CD8-positive, alpha-beta T cell (primary cell): ENCODE measurements at regions of chr17 and their contacts with region 1.

Region 1: DNA sequence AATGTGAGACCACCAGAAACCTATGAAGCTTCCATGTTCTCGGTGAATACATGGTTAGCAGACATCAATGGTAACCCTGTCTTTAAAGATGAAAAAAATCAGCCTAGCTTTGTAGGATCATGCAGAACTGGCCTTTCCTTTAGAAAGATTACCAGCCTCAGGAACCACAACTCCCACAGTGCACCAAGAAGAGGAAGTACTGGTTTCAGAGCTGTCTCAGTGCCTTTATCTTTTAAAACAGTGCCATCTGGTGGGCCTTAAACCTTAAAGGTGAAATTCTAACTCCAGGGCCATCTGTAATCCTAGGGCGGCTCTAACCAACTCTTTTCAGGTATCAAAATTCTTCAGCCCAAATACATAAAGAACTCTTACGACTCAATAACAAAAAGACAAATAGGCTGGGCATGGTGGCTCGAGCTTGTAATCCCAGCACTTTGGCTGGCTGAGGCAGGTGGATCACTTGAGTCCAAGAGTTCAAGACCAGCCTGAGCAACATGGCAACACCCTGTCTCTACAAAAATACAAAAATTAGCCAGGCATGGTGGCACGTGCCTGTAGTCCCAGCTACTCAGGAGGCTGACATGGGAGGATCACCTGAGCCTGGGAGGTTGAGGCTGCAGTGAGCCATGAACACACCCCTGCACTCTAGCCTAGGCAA is 5.4 kb downstream of the ATPAF2 start:
- DNase-seq: peak in 8 of 9 experiments; percentile 28 to 88 (median 56)
- ATAC-seq: peak; percentile 94
- H3K4me3 ChIP-seq: no peak overlapping the region
- H3K4me3 Mint-ChIP-seq: no peak overlapping the region
- H3K27ac ChIP-seq: no peak overlapping the region
- H3K27ac Mint-ChIP-seq: no peak overlapping the region
- H3K4me1 ChIP-seq: peaks cover 18% of the 10 kb centered on the region
- H3K4me1 Mint-ChIP-seq: peaks cover 28% of the 10 kb centered on the region
- H3K27me3 ChIP-seq: no peaks in the 10 kb centered on the region
- H3K27me3 Mint-ChIP-seq: no peaks in the 10 kb centered on the region
- CTCF ChIP-seq: peak; percentile 62

Region 2: GRCh38 chr17:17496189-17497064 is 537.1 kb before region 1 on chr17 and contains the start of gene RASD1:
- CTCF ChIA-PET with region 1: interaction called, 3 read pairs
- POLR2A ChIA-PET with region 1: no interaction called
- intact Hi-C with region 1: loop called (anchors 2 to 5 kb)
- DNase-seq: peak; percentile 62 to 88 (median 75)
- ATAC-seq: peak; percentile 85
- H3K4me3 ChIP-seq: peak within 1 kb of the TSS; percentile 51 to 76
- H3K4me3 Mint-ChIP-seq: peak within 1 kb of the TSS; percentile 84
- H3K27ac ChIP-seq: no peak within 1 kb of the TSS
- H3K27ac Mint-ChIP-seq: no peak within 1 kb of the TSS
- H3K4me1 ChIP-seq: peaks cover 13% of the 10 kb centered on the region
- H3K4me1 Mint-ChIP-seq: peaks cover 16% of the 10 kb centered on the region
- H3K27me3 ChIP-seq: peaks cover 0 to 8% of the 10 kb centered on the region in 2 experiments
- H3K27me3 Mint-ChIP-seq: peaks cover 10% of the 10 kb centered on the region
- CTCF ChIP-seq: peak; percentile 95
- total RNA-seq, gene RASD1: 2.8 to 2.9 TPM

Region 3: DNA sequence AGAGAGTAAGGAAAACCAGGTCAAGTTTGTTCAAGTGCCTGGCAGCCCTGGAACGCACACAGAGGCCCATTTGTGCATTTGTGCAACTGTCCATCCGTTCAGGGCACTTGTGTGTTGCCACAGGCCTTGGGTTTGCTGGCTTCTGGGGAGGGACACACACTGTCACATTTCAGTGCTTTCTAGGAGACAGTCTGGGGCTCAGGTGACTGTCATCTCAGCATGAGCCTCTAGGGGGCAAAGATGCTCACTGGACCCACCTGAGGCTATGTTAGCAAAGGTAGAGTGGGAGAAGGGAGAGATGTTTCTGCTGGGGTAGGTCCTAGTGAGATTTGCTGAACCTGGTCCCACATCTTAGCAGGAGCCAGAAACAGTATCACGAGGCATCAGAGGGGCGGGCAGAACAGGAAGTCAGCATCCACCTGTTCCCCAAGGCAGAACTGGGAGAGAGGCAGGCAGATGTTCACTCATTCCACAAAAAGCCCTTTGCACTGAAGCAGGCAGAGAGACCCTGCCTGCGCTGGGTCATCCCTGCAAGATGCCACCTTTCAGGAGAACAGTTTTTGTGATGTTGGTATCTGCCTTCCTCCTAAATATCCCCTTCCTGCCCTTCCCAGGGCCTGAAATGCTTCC is 303.8 kb before region 1 on chr17:
- CTCF ChIA-PET with region 1: no interaction called
- POLR2A ChIA-PET with region 1: no interaction called
- intact Hi-C with region 1: loop called in 1 of 2 experiments (anchors 1 kb)
- DNase-seq: peak; percentile 29 to 78 (median 67)
- ATAC-seq: peak; percentile 90
- H3K4me3 ChIP-seq: no peak overlapping the region
- H3K4me3 Mint-ChIP-seq: no peak overlapping the region
- H3K27ac ChIP-seq: no peak overlapping the region
- H3K27ac Mint-ChIP-seq: peak overlapping the region; percentile 58
- H3K4me1 ChIP-seq: peaks cover 33% of the 10 kb centered on the region
- H3K4me1 Mint-ChIP-seq: peaks cover 31% of the 10 kb centered on the region
- H3K27me3 ChIP-seq: no peaks in the 10 kb centered on the region
- H3K27me3 Mint-ChIP-seq: no peaks in the 10 kb centered on the region
- CTCF ChIP-seq: peak; percentile 59

Region 4: DNA sequence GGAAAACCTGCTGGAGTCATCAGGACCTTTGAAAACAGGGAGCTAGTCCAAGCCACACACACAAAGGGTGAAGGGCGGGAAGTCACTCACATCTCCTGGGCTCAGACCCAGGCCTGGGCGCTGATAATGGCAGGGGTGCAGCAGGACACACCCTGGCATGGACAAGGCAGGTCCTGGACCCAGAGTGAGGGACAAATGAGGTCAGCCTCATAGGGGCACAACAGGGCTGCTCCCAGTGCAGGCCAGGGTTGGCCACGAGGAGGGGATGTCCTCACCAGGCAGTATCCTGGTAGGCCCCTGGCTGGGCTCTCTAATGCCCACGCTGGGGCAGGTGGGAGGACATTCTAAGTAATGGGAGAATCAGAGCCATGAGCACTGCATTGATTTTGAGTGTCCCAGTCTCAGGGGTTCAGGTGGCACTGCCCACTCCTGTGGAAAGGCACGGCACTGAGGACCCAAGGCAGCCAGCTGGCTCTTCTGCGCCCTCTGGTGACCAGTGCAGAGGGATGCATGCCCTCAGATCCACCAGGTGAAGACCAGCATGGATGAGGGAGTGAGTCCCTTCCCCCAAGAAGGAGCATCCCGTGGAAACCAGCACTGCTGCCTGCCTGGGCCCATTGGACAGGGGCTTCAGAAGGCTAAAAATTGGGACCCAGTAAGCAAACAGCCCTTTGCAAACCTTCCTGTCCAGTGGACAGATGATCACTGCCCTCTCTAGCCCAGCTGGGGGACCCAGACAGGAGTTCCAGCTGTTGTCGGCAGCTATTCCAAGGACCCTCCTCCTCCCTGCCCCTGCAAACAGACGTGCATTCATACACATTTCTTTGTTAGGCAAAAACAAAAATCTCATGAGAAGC is 173.4 kb before region 1 on chr17:
- CTCF ChIA-PET with region 1: interaction called, 12 read pairs
- POLR2A ChIA-PET with region 1: no interaction called
- intact Hi-C with region 1: no loop called
- DNase-seq: peak; percentile 45 to 84 (median 71)
- ATAC-seq: peak; percentile 98
- H3K4me3 ChIP-seq: no peak overlapping the region
- H3K4me3 Mint-ChIP-seq: no peak overlapping the region
- H3K27ac ChIP-seq: no peak overlapping the region
- H3K27ac Mint-ChIP-seq: no peak overlapping the region
- H3K4me1 ChIP-seq: peaks cover 44% of the 10 kb centered on the region
- H3K4me1 Mint-ChIP-seq: peaks cover 38% of the 10 kb centered on the region
- H3K27me3 ChIP-seq: no peaks in the 10 kb centered on the region
- H3K27me3 Mint-ChIP-seq: no peaks in the 10 kb centered on the region
- CTCF ChIP-seq: peak; percentile 93

Region 5: GRCh38 chr17:17919169-17920107 is 114.1 kb before region 1 on chr17:
- CTCF ChIA-PET with region 1: interaction called, 8 read pairs
- POLR2A ChIA-PET with region 1: no interaction called
- intact Hi-C with region 1: loop called in 1 of 2 experiments (anchors 1 kb)
- DNase-seq: peak; percentile 34 to 79 (median 67)
- ATAC-seq: peak; percentile 97
- H3K4me3 ChIP-seq: no peak overlapping the region
- H3K4me3 Mint-ChIP-seq: no peak overlapping the region
- H3K27ac ChIP-seq: no peak overlapping the region
- H3K27ac Mint-ChIP-seq: no peak overlapping the region
- H3K4me1 ChIP-seq: peaks cover 6% of the 10 kb centered on the region
- H3K4me1 Mint-ChIP-seq: peaks cover 13% of the 10 kb centered on the region
- H3K27me3 ChIP-seq: no peaks in the 10 kb centered on the region
- H3K27me3 Mint-ChIP-seq: no peaks in the 10 kb centered on the region
- CTCF ChIP-seq: peak; percentile 73

Region 6: DNA sequence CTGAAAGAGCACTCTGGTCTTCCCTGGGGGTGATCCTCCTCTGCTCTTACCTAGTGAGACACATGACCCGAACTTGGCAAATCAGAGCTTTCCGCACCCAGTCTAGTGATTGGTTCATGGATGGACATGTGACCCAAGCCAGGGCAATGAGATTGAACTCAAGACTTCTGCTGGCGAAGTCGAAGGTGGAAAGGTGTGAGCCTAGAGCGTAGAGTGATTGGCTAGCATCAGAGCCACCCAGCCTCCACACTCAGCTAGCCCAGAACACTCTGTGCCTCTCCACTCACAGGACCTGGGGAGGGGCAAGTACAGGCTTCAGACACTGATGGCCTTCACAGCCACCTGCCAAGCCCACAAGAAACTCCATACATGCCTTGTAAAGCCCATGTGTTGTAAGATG is 12.2 kb before region 1 on chr17:
- CTCF ChIA-PET with region 1: interaction called, 13 read pairs
- POLR2A ChIA-PET with region 1: interaction called, 5 read pairs
- intact Hi-C with region 1: no loop called
- DNase-seq: no peak
- ATAC-seq: no peak
- H3K4me3 ChIP-seq: no peak overlapping the region
- H3K4me3 Mint-ChIP-seq: no peak overlapping the region
- H3K27ac ChIP-seq: no peak overlapping the region
- H3K27ac Mint-ChIP-seq: no peak overlapping the region
- H3K4me1 ChIP-seq: peaks cover 11% of the 10 kb centered on the region
- H3K4me1 Mint-ChIP-seq: peaks cover 13% of the 10 kb centered on the region
- H3K27me3 ChIP-seq: no peaks in the 10 kb centered on the region
- H3K27me3 Mint-ChIP-seq: no peaks in the 10 kb centered on the region
- CTCF ChIP-seq: no peak